ENCODE measurements at regions of chr1 and their contacts with region 1.

Region 1: DNA sequence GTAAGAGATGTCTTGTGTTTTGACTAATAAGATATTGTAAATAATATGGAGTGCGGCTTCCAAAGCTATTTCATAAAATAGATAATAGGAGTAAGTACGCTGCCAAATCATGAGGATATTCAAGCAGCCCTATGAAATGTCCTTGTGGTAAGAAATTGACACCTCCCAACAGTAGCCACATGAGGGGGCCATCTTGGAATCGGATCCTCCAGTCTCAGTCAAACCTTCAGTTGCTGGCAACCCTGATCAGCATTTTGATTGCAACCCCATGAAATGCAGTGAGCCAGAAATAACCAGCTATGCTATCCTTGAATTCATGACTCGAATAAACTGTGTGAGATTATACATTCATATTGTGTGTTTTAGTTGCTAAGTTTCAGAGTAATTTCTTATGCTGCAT is 212.4 kb downstream of the PLA2G4A start:
- DNase-seq: no peak
- H3K4me3 ChIP-seq: no peak overlapping the region
- H3K27ac ChIP-seq: no peak overlapping the region
- H3K27me3 ChIP-seq: no peaks in the 10 kb centered on the region
- CTCF ChIP-seq: no peak

Region 2: DNA sequence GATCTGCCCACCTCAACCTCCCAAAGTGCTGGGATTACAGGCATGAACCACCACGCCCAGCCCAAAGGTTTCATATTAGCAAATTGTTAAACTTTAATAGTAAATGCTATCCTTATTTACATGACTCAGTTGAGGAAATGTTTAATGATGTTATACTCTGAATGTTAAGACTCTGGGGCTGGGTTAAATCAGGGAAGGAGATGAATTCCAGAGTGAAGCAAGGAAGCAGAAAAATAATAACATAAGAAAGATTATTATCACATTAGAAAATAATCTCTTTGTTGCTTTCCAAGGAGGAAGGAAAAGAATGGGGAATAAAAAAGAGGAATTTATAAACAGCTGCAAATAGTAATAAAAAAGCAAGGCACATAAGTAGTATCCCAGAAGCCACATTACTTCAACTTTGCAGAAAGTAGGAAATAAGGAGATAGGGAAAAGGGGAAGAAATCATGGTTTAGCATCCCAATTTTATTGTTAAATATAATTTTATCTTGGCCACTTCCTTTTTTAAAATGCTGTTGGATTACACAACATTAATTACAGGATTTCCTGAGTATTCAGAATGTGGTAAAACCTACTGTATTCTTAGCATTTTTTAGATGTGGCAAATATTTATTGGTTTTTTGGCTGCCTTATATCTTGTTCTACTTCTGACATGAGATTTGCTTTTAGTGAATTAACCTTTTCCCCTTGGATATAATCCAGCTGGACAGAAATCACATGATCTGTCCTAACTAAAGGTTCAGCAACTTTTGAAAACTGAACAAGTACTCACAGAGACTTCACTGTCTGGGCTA is 466.0 kb before region 1 on chr1:
- CTCF ChIA-PET with region 1: no interaction called
- POLR2A ChIA-PET with region 1: no interaction called
- DNase-seq: no peak
- H3K4me3 ChIP-seq: no peak overlapping the region
- H3K27ac ChIP-seq: no peak overlapping the region
- H3K27me3 ChIP-seq: no peaks in the 10 kb centered on the region
- CTCF ChIP-seq: no peak

Region 3: DNA sequence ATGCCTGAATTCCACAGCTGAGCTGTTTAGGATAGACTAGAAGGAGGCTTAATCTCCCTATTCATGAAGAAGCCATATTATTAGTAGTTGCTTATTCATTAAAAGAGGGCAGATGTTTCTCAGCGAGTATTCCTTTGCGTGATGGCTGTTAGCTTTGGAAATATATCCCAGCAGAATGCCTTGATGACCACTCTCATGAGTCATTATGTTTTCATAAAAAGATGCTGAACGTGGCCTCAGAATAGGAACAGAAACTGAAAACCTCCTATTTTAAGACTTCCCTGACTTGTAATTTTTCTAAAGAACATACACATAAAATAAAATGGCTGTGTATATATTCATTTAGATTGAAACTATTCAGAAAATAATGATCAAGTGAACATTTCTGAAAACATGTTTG is 222.0 kb before region 1 on chr1:
- CTCF ChIA-PET with region 1: no interaction called
- POLR2A ChIA-PET with region 1: no interaction called
- DNase-seq: peak; percentile 45
- H3K4me3 ChIP-seq: no peak overlapping the region
- H3K27ac ChIP-seq: peak overlapping the region; percentile 12
- H3K27me3 ChIP-seq: no peaks in the 10 kb centered on the region
- CTCF ChIP-seq: no peak

Region 4: DNA sequence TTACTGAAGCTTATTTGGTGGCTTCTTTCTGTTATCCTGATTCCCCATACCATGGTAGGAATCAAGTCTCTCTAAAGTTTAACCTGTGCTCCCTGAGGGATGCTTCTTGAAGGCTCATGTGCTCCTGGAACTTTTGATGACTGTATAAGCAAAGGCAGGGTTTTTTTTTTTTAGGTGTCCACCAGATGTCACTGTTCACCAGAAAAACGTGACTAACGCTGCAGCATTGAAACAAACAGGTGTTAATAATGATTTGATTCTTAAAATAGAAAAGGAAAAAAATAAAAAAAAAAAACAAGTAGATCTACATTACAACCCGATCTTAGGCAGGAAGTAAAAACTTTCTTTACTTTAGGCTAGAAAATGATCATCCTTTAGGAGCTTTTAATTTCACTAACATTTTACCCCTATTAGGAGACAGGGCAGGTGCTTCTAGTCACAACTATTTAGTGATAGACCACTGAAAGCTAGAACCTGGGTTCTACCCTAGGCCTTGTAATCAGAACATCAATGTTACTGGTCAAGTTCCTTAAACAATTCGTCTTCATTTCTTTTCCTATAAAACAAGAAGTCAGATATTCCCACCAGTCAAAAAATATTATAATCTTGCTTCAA is 10.6 kb after region 1 on chr1:
- CTCF ChIA-PET with region 1: interaction called, 18 read pairs
- POLR2A ChIA-PET with region 1: no interaction called
- DNase-seq: peak; percentile 7
- H3K4me3 ChIP-seq: no peak overlapping the region
- H3K27ac ChIP-seq: no peak overlapping the region
- H3K27me3 ChIP-seq: no peaks in the 10 kb centered on the region
- CTCF ChIP-seq: peak; percentile 57

Measured in AG04450 (cell line).